ENCODE measurements at regions of chr13 and their contacts with region 1.

Region 1: GRCh38 chr13:78121459-78122348 is 203.1 kb upstream of the EDNRB start:
- DNase-seq: peak in 1 of 2 donors; percentile 24
- H3K4me3 ChIP-seq: no peak overlapping the region
- H3K27ac ChIP-seq: no peak overlapping the region
- H3K4me1 ChIP-seq: no peaks in the 10 kb centered on the region
- H3K27me3 ChIP-seq: peaks cover 0 to 8% of the 10 kb centered on the region in 2 donors
- CTCF ChIP-seq: peak; percentile 76 to 77

Region 2: GRCh38 chr13:77779552-77780272 is 342.0 kb before region 1 on chr13:
- intact Hi-C with region 1: loop called (anchors 5 kb)
- DNase-seq: peak in 1 of 2 donors; percentile 28
- H3K4me3 ChIP-seq: no peak overlapping the region
- H3K27ac ChIP-seq: no peak overlapping the region
- H3K4me1 ChIP-seq: no peaks in the 10 kb centered on the region
- H3K27me3 ChIP-seq: no peaks in the 10 kb centered on the region
- CTCF ChIP-seq: peak; percentile 50 to 58

Measured in tibial artery (tissue), 4 donors.